HepG2 (cell line): ENCODE measurements at regions of chr11 and their contacts with region 1.

Region 1: DNA sequence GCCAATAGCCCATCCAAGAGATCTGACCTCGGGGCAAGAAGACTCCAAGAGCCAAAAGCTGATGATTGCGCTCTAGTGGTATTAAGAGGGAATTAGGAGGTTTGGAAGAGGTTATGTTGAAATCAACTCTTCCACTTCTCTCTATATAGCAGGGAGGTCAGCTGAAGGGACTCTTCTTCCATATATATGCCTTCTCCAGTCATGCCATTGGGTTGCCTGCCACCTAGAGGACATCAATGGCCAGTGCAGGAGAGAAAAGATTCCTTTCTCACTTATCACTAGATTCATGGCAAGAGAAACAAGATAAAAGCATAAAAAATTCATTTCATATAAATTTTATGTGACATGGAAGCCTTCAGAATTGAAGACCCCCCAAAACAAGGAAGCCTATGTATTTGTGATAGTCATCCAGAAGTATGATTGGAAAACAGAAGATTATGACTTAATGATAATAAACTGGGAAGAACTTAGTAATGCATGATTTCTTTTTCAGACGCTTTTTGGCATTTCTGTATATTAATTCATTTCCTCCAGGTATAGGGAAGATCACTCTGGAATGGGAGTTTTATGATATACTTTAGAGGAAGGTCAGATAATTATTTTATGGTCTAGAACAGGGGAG is 435.1 kb upstream of the DDI1 start:
- DNase-seq: peak; percentile 35
- ATAC-seq: peak; percentile 88
- H3K4me3 ChIP-seq: no peak overlapping the region
- H3K27ac ChIP-seq: no peak overlapping the region
- H3K4me1 ChIP-seq: no peaks in the 10 kb centered on the region
- H3K27me3 ChIP-seq: no peaks in the 10 kb centered on the region
- CTCF ChIP-seq: peak; percentile 77
- EP300 ChIP-seq: no peak
- POLR2A ChIP-seq: no peak
- RAD21 ChIP-seq: no peak; the same call in 1 of the 2 replicates

Region 2: GRCh38 chr11:103108933-103109817 is 492.2 kb before region 1 on chr11 and contains the start of gene DYNC2H1:
- CTCF ChIA-PET with region 1: no interaction called
- POLR2A ChIA-PET with region 1: no interaction called
- in situ Hi-C with region 1: no loop called
- intact Hi-C with region 1: loop called (anchors 5 kb)
- DNase-seq: peak; percentile 67
- ATAC-seq: peak; percentile 99
- H3K4me3 ChIP-seq: peak within 1 kb of the TSS; percentile 64 to 70 (median 67)
- H3K27ac ChIP-seq: no peak within 1 kb of the TSS
- H3K4me1 ChIP-seq: peaks cover 16% of the 10 kb centered on the region
- H3K27me3 ChIP-seq: no peaks in the 10 kb centered on the region; a peak in 2 of 5 replicates
- CTCF ChIP-seq: peak; percentile 72
- EP300 ChIP-seq: peak in 1 of 2 experiments; percentile 12; a peak in 1 of 4 replicates
- POLR2A ChIP-seq: no peak
- RAD21 ChIP-seq: no peak
- total RNA-seq, gene DYNC2H1: 0.66 and 1.2 TPM in 2 replicates

Region 3: GRCh38 chr11:103202048-103202651 is 399.2 kb before region 1 on chr11:
- CTCF ChIA-PET with region 1: interaction called, 7 read pairs
- POLR2A ChIA-PET with region 1: no interaction called
- in situ Hi-C with region 1: no loop called
- intact Hi-C with region 1: loop called (anchors 1 kb)
- DNase-seq: peak; percentile 10
- ATAC-seq: peak; percentile 58
- H3K4me3 ChIP-seq: no peak overlapping the region
- H3K27ac ChIP-seq: no peak overlapping the region
- H3K4me1 ChIP-seq: no peaks in the 10 kb centered on the region
- H3K27me3 ChIP-seq: no peaks in the 10 kb centered on the region
- CTCF ChIP-seq: peak; percentile 55
- EP300 ChIP-seq: no peak
- POLR2A ChIP-seq: no peak
- RAD21 ChIP-seq: no peak

Region 4: DNA sequence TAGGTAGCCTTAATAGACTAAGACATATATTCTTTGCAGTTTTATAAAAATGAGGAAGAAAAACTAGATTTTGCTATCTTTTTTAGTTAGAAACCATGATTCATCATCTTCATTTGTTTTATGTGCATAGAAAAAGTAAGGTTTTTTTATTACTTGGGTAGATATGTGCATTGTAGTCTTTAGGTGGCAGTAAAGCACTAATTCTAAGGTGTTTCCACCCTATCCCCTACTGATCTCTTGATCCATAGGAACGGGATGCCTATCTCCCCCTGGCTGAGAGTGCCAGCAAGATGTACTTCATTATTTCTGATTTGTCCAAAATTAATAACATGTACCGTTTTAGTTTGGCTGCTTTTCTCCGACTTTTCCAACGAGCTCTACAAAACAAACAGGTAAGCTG is 344.0 kb before region 1 on chr11:
- CTCF ChIA-PET with region 1: interaction called, 9 read pairs
- POLR2A ChIA-PET with region 1: no interaction called
- in situ Hi-C with region 1: no loop called
- intact Hi-C with region 1: loop called (anchors 1 kb)
- DNase-seq: peak; percentile 3
- ATAC-seq: peak; percentile 82
- H3K4me3 ChIP-seq: no peak overlapping the region
- H3K27ac ChIP-seq: no peak overlapping the region
- H3K4me1 ChIP-seq: no peaks in the 10 kb centered on the region
- H3K27me3 ChIP-seq: no peaks in the 10 kb centered on the region
- CTCF ChIP-seq: 0 out of 2 replicates have a peak, but pooled peaks have one; percentile 15
- EP300 ChIP-seq: no peak
- POLR2A ChIP-seq: no peak
- RAD21 ChIP-seq: no peak

Region 5: GRCh38 chr11:103326070-103326794 is 275.1 kb before region 1 on chr11:
- CTCF ChIA-PET with region 1: interaction called, 5 read pairs
- POLR2A ChIA-PET with region 1: no interaction called
- in situ Hi-C with region 1: loop called (anchors 10 kb)
- intact Hi-C with region 1: loop called (anchors 1 kb)
- DNase-seq: peak; percentile 51
- ATAC-seq: peak; percentile 97
- H3K4me3 ChIP-seq: peak overlapping the region in 1 of 3 experiments; percentile 9; a peak in 1 of 6 replicates
- H3K27ac ChIP-seq: no peak overlapping the region
- H3K4me1 ChIP-seq: no peaks in the 10 kb centered on the region
- H3K27me3 ChIP-seq: no peaks in the 10 kb centered on the region
- CTCF ChIP-seq: peak; percentile 70
- EP300 ChIP-seq: no peak
- POLR2A ChIP-seq: no peak
- RAD21 ChIP-seq: no peak

Region 6: DNA sequence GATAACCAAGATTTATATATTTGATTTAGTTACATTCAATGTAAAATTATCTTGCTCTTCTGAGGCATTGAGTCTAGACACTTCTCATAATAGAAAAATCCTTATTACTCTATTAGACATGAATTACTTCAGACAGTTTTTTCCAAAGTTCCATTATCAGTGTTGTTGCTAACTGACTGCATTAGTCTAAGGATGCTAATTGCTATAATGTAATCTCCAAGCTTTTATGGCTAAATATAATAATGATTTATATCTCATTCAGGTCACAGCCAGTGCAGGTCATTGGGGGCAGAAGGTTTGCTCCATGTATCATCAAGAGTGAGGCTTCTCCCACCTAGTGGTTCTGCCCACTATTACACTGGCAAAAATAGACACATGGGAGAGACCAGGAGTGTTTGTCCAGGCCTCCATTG is 57.9 kb after region 1 on chr11:
- CTCF ChIA-PET with region 1: no interaction called
- POLR2A ChIA-PET with region 1: no interaction called
- in situ Hi-C with region 1: no loop called
- intact Hi-C with region 1: no loop called
- DNase-seq: no peak
- ATAC-seq: peak; percentile 69
- H3K4me3 ChIP-seq: no peak overlapping the region
- H3K27ac ChIP-seq: no peak overlapping the region
- H3K4me1 ChIP-seq: no peaks in the 10 kb centered on the region
- H3K27me3 ChIP-seq: no peaks in the 10 kb centered on the region
- CTCF ChIP-seq: 0 out of 2 replicates have a peak, but pooled peaks have one; percentile 5
- EP300 ChIP-seq: no peak
- POLR2A ChIP-seq: no peak
- RAD21 ChIP-seq: no peak